MCF 10A (cell line): ENCODE measurements at regions of chr12 and their contacts with region 1.

Region 1: DNA sequence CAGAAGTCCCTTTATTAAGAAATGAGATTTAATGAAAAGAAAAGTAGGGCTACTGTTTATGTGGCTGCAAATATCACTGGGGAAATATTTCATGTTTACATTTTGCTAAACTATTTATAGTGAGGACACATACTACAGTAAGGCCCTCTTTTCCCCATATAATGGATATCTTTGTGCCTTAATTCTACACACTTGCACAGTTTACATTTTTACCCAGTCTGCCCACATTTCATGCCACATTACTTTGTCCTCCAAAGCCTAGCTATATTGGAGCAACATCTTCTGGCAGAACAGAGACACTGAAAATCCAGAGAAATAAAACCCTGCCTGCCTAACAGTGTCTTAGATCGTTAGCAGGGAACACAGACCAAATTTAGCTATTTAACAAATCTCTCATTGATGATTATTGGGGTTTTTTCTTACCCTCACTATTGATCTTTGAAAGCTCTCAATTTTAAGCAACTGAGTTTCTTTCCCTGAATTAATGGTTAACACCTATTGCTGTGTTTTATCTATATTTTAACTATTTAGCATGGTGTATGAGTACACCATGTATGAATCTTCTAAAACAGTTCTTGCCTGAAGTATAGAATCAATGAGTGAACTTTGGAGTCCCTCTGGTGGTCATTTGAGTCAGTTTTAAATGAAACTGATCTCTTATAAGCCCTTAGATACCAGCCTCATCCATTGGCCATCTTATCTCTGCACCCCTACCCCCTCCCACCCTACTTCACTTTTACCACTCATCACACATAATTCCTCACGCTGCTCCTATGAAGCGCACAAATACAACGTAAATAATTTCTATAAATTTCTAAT is 170.2 kb downstream of the BCAT1 start:
- DNase-seq: peak; percentile 47
- H3K4me3 Mint-ChIP-seq: no peak overlapping the region
- H3K27ac Mint-ChIP-seq: no peak overlapping the region
- H3K4me1 Mint-ChIP-seq: peaks cover 6% of the 10 kb centered on the region
- H3K27me3 Mint-ChIP-seq: no peaks in the 10 kb centered on the region
- CTCF ChIP-seq: peak; percentile 29

Region 2: DNA sequence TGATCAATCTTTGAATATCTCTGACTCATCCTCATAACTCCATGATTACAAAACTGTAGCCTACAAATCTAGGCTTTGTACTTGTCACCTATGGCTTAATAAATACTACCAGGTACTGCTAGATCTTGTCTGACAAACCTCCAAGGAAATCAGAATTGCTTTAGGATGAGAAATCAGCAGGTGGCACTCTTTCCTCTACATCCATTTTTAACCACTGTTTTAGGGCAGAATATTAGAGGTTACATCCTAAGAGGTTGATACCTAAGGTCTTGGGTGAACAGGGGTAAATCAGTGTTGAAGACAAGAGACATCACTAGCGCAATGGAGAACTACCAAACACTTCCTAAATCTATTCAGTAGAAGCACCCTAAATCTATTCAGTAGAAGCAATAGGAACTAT is 766.2 kb before region 1 on chr12:
- CTCF ChIA-PET with region 1: interaction called, 8 read pairs
- POLR2A ChIA-PET with region 1: no interaction called
- intact Hi-C with region 1: loop called (anchors 1 kb)
- DNase-seq: peak; percentile 54
- H3K4me3 Mint-ChIP-seq: no peak overlapping the region
- H3K27ac Mint-ChIP-seq: no peak overlapping the region
- H3K4me1 Mint-ChIP-seq: no peaks in the 10 kb centered on the region
- H3K27me3 Mint-ChIP-seq: no peaks in the 10 kb centered on the region
- CTCF ChIP-seq: peak; percentile 54

Region 3: DNA sequence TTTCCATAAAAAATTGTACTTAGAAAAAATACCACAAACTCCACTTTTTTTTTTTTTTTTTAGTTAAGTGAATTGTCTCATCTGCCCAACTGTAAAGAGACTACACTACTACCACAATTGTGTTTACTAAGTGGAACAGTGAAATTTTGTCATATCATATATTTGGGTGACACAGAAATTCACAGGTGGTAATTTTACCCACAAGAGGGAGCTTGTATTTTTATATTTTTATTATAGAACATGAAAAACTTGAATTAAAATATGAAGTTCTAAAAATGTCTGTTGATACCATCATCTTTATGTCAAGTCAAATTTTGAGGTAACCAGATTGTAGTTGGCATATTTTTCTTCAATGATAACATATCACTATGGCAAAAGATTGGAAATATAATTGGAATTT is 499.9 kb before region 1 on chr12:
- CTCF ChIA-PET with region 1: no interaction called
- POLR2A ChIA-PET with region 1: no interaction called
- intact Hi-C with region 1: loop called (anchors 5 kb)
- DNase-seq: no peak
- H3K4me3 Mint-ChIP-seq: no peak overlapping the region
- H3K27ac Mint-ChIP-seq: no peak overlapping the region
- H3K4me1 Mint-ChIP-seq: no peaks in the 10 kb centered on the region
- H3K27me3 Mint-ChIP-seq: peaks cover 16% of the 10 kb centered on the region
- CTCF ChIP-seq: no peak

Region 4: GRCh38 chr12:24596768-24597388 is 181.8 kb before region 1 on chr12:
- CTCF ChIA-PET with region 1: interaction called, 4 read pairs
- POLR2A ChIA-PET with region 1: no interaction called
- intact Hi-C with region 1: loop called (anchors 2 kb)
- DNase-seq: peak; percentile 54
- H3K4me3 Mint-ChIP-seq: no peak overlapping the region
- H3K27ac Mint-ChIP-seq: no peak overlapping the region
- H3K4me1 Mint-ChIP-seq: peaks cover 6% of the 10 kb centered on the region
- H3K27me3 Mint-ChIP-seq: peaks cover 22% of the 10 kb centered on the region
- CTCF ChIP-seq: peak; percentile 53

Region 5: GRCh38 chr12:24838531-24838950 is 59.8 kb after region 1 on chr12:
- CTCF ChIA-PET with region 1: interaction called, 5 read pairs
- POLR2A ChIA-PET with region 1: no interaction called
- intact Hi-C with region 1: loop called (anchors 1 kb)
- DNase-seq: peak; percentile 79
- H3K4me3 Mint-ChIP-seq: peak overlapping the region; percentile 6
- H3K27ac Mint-ChIP-seq: peak overlapping the region; percentile 77
- H3K4me1 Mint-ChIP-seq: peaks cover 40% of the 10 kb centered on the region
- H3K27me3 Mint-ChIP-seq: no peaks in the 10 kb centered on the region
- CTCF ChIP-seq: no peak